ENCODE measurements at regions of chr6 and their contacts with region 1.

Region 1: GRCh38 chr6:32868257-32868788 is 14.3 kb downstream of the PSMB9 start:
- DNase-seq: peak; percentile 69 to 88 (median 73)
- ATAC-seq: peak; percentile 97
- H3K4me3 ChIP-seq: no peak overlapping the region
- H3K27ac ChIP-seq: no peak overlapping the region
- H3K4me1 ChIP-seq: no peaks in the 10 kb centered on the region
- H3K27me3 ChIP-seq: peaks cover 15 to 18% of the 10 kb centered on the region in 2 experiments; a peak in 4 of 5 replicates
- CTCF ChIP-seq: peak; percentile 82 to 98 (median 89)
- EP300 ChIP-seq: no peak
- POLR2A ChIP-seq: no peak
- RAD21 ChIP-seq: peak; percentile 95 to 98

Region 2: GRCh38 chr6:32060966-32061655 is 807.2 kb before region 1 on chr6:
- CTCF ChIA-PET with region 1: no interaction called
- POLR2A ChIA-PET with region 1: no interaction called
- in situ Hi-C with region 1: no loop called
- intact Hi-C with region 1: no loop called
- DNase-seq: peak in 1 of 4 experiments; percentile 45
- ATAC-seq: peak; percentile 81
- H3K4me3 ChIP-seq: no peak overlapping the region
- H3K27ac ChIP-seq: no peak overlapping the region
- H3K4me1 ChIP-seq: peaks cover 0 to 22% of the 10 kb centered on the region in 2 experiments; a peak in 2 of 5 replicates
- H3K27me3 ChIP-seq: peaks cover 15 to 20% of the 10 kb centered on the region in 2 experiments
- CTCF ChIP-seq: peak; percentile 41 to 56 (median 46); a peak in 5 of 6 replicates
- EP300 ChIP-seq: no peak
- POLR2A ChIP-seq: no peak
- RAD21 ChIP-seq: peak in 1 of 2 experiments; percentile 50; a peak in 2 of 4 replicates

Region 3: DNA sequence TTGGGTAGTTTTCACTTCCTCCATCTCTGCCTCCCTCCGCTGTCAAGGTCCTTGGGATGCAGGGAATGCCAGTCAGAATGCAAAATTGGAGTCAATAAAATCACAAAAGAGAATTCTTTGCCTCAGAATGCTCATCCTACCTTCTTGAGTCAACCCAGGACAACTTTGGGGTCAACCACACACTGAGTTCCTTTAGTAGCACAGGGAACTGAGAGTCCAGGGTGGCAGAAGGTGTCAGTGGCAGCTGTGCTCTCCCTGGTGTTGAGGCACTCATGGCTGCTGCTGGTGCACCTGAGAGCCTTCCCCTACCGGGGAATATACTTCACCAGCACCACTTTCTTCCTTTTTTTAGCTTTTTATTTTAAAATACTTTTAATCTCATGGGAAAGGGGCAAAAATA is 643.6 kb before region 1 on chr6:
- CTCF ChIA-PET with region 1: interaction called, 13 read pairs
- POLR2A ChIA-PET with region 1: no interaction called
- in situ Hi-C with region 1: no loop called
- intact Hi-C with region 1: no loop called
- DNase-seq: no peak
- ATAC-seq: no peak
- H3K4me3 ChIP-seq: no peak overlapping the region
- H3K27ac ChIP-seq: no peak overlapping the region
- H3K4me1 ChIP-seq: peaks cover 0 to 4% of the 10 kb centered on the region in 2 experiments; a peak in 3 of 5 replicates
- H3K27me3 ChIP-seq: peaks cover 25 to 50% of the 10 kb centered on the region in 2 experiments; a peak in 4 of 5 replicates
- CTCF ChIP-seq: no peak
- EP300 ChIP-seq: no peak
- POLR2A ChIP-seq: no peak
- RAD21 ChIP-seq: no peak

Region 4: GRCh38 chr6:32700391-32701040 is 167.8 kb before region 1 on chr6:
- CTCF ChIA-PET with region 1: no interaction called
- POLR2A ChIA-PET with region 1: no interaction called
- in situ Hi-C with region 1: no loop called
- intact Hi-C with region 1: loop called (anchors 5 kb)
- DNase-seq: peak; percentile 19 to 72 (median 40)
- ATAC-seq: peak; percentile 82
- H3K4me3 ChIP-seq: no peak overlapping the region
- H3K27ac ChIP-seq: no peak overlapping the region
- H3K4me1 ChIP-seq: no peaks in the 10 kb centered on the region
- H3K27me3 ChIP-seq: peaks cover 0 to 9% of the 10 kb centered on the region in 2 experiments; a peak in 2 of 5 replicates
- CTCF ChIP-seq: peak; percentile 66 to 81 (median 78)
- EP300 ChIP-seq: no peak
- POLR2A ChIP-seq: no peak
- RAD21 ChIP-seq: peak; percentile 80 to 84

Region 5: GRCh38 chr6:32825966-32826365 is 42.4 kb before region 1 on chr6:
- CTCF ChIA-PET with region 1: interaction called, 24 read pairs
- POLR2A ChIA-PET with region 1: interaction called, 10 read pairs
- in situ Hi-C with region 1: no loop called
- intact Hi-C with region 1: loop called (anchors 5 kb)
- DNase-seq: peak in 1 of 4 experiments; percentile 32
- ATAC-seq: peak; percentile 77
- H3K4me3 ChIP-seq: no peak overlapping the region
- H3K27ac ChIP-seq: no peak overlapping the region
- H3K4me1 ChIP-seq: no peaks in the 10 kb centered on the region
- H3K27me3 ChIP-seq: no peaks in the 10 kb centered on the region
- CTCF ChIP-seq: peak; percentile 46 to 65 (median 46); a peak in 4 of 6 replicates
- EP300 ChIP-seq: no peak
- POLR2A ChIP-seq: no peak
- RAD21 ChIP-seq: peak; percentile 57 to 77

Region 6: DNA sequence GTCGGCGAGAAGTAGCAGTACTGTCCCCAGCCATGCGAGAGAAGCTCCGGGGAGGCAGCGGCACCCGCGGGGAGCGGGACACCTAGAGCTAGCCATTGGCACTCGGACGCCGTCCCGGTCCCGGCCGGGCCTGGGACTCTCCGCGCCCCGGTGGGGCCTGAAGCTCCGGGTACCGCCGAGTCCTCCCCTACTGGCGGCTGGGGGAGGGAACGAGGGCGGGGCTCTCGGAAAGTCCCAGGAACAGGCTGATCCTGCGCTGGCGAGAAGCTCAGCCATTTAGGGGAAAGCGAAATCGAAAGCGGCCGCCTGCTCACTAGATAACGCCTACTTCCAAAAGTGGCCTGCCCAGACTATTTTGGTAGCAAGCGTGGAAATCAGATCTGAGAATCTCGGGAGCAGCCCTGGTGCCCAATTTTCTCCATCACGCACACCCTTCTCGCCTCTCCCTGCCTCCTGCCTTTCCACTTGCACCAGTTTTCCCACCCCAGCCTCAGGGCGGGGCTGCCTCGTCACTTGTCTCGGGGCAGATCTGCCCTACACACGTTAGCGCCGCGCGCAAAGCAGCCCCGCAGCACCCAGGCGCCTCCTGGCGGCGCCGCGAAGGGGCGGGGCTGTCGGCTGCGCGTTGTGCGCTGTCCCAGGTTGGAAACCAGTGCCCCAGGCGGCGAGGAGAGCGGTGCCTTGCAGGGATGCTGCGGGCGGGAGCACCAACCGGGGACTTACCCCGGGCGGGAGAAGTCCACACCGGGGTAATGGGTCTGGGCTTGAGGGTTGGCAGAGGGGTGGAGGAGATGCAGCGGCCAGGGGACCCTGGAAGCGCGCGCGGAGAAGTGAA is 14.6 kb before region 1 on chr6 and contains the starts of genes PSMB9 and TAP1:
- CTCF ChIA-PET with region 1: interaction called, 14 read pairs
- POLR2A ChIA-PET with region 1: interaction called, 17 read pairs
- in situ Hi-C with region 1: no loop called
- intact Hi-C with region 1: no loop called
- DNase-seq: peak; percentile 94 to 96 (median 95)
- ATAC-seq: peak; percentile 98
- H3K4me3 ChIP-seq: peak within 1 kb of the TSS; percentile 65
- H3K27ac ChIP-seq: peak within 1 kb of the TSS; percentile 61
- H3K4me1 ChIP-seq: peaks cover 27 to 30% of the 10 kb centered on the region in 2 experiments
- H3K27me3 ChIP-seq: peaks cover 17 to 47% of the 10 kb centered on the region in 2 experiments
- CTCF ChIP-seq: peak; percentile 91 to 98 (median 98)
- EP300 ChIP-seq: 0 out of 2 replicates have a peak, but pooled peaks have one; percentile 33
- POLR2A ChIP-seq: no peak; the same call in 1 of the 2 replicates
- RAD21 ChIP-seq: peak; percentile 84 to 87
- polyA plus RNA-seq, gene PSMB9: 1.9 to 2.8 TPM
- polyA plus RNA-seq, gene TAP1: 1.3 to 1.7 TPM

Measured in K562 (cell line).